AG04450 (cell line): ENCODE measurements at regions of chr10 and their contacts with region 1.

Region 1: GRCh38 chr10:80260295-80261243 is 28.9 kb downstream of the MAT1A start:
- DNase-seq: no peak
- H3K4me3 ChIP-seq: no peak overlapping the region
- H3K27ac ChIP-seq: no peak overlapping the region
- H3K27me3 ChIP-seq: peaks cover 9% of the 10 kb centered on the region
- CTCF ChIP-seq: peak; percentile 94

Region 2: DNA sequence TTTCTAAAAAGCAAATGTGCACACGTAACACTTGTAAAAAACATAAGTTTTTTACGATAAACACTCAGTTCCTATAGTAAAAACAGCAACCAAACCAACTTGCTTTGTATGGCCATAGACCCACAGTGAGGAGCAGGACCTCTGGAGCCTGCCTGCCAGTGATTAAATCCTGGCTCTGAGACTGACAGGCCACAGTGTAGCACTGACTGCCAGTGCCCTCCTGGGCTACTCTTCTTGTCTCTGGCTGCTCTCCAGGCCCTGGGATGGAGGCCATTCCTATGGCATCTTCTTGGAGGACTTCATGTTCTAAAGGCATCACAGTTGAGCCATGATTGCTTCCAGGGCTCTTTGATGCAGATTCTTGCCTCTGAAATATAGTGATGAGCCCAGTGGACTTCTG is 204.8 kb before region 1 on chr10:
- CTCF ChIA-PET with region 1: interaction called, 21 read pairs
- POLR2A ChIA-PET with region 1: no interaction called
- DNase-seq: no peak
- H3K4me3 ChIP-seq: no peak overlapping the region
- H3K27ac ChIP-seq: no peak overlapping the region
- H3K27me3 ChIP-seq: peaks cover 2% of the 10 kb centered on the region
- CTCF ChIP-seq: no peak

Region 3: DNA sequence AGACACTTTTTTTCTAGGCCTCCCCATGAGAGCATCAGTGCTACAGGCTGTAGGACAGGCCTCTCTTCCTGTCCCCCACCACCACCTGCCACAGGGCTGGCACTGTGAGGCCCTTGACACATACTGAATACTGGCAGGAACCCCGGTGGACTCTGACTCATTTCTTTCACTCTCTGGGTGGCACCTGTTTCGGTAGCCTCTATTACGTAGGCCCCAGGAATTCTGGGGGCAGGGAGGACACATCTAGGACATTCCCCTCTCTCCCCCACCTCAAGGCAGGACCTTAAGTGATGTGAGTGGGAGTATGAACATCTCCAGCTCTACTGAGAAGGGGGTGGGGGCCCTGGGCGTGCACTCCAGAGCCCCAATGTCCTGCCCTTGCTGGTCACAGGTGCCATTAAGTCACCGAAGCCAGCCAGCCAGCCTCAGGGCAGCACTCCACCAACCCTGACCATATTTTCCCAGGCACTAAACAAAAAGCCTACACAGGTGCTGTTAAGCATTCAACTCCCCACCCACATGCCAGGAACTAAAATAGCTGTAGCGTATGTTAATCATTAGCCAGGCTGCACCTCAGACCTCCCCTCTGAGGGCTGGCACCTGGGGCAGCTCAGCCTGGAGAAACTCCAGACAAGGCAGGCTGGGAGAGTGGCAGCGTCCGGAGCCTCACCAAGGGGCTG is 64.2 kb before region 1 on chr10:
- CTCF ChIA-PET with region 1: no interaction called
- POLR2A ChIA-PET with region 1: no interaction called
- DNase-seq: no peak
- H3K4me3 ChIP-seq: no peak overlapping the region
- H3K27ac ChIP-seq: no peak overlapping the region
- H3K27me3 ChIP-seq: no peaks in the 10 kb centered on the region
- CTCF ChIP-seq: no peak

Region 4: GRCh38 chr10:80272793-80273517 is 12.4 kb after region 1 on chr10:
- CTCF ChIA-PET with region 1: interaction called, 13 read pairs
- POLR2A ChIA-PET with region 1: no interaction called
- DNase-seq: no peak
- H3K4me3 ChIP-seq: no peak overlapping the region
- H3K27ac ChIP-seq: no peak overlapping the region
- H3K27me3 ChIP-seq: peaks cover 7% of the 10 kb centered on the region
- CTCF ChIP-seq: no peak